GM23248 (cell line): ENCODE measurements at regions of chr16 and their contacts with region 1.

Region 1: DNA sequence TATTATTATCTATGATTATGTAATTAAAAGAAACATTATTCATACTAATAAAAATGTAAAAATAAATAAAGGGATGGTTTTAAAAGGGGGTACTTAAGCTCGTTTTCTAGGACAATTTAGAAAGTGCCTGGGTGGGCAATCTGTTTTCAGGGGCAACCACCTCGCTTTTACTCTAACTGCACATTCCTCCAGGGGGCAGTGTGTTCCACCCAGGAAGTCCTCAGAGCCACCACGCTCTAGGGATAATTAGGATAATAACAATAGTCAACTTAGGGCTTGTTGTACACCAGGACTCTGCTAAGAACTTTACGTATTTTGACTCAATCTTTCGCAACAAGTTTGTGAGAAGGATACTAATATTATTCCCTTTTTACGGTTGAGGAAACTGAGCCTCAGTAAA is 396.7 kb upstream of the MAF start:
- DNase-seq: peak; percentile 52
- H3K4me3 ChIP-seq: no peak overlapping the region
- H3K27ac ChIP-seq: no peak overlapping the region
- H3K4me1 ChIP-seq: no peaks in the 10 kb centered on the region
- H3K27me3 ChIP-seq: no peaks in the 10 kb centered on the region

Region 2: DNA sequence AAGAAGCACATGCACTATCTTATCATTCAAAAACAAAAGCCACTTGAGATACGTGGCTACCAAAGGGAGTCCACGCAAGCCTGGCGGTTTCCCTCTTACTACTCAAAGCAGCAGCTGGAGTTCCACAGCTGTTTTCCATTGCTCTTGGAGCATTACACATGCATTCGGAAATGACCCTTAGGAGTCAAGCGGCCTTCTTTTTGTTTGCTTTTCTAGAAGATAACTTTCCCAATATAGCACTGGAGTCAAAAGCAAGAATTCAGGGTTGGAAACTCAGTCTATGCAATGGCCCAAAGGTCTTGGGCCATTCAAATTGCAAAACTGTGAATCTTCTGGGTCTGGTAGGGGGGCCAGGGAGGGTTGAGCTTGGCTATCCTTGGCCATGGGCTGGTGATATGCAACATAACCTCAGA is 298.9 kb before region 1 on chr16:
- in situ Hi-C with region 1: no loop called
- DNase-seq: no peak
- H3K4me3 ChIP-seq: no peak overlapping the region
- H3K27ac ChIP-seq: no peak overlapping the region
- H3K4me1 ChIP-seq: no peaks in the 10 kb centered on the region
- H3K27me3 ChIP-seq: no peaks in the 10 kb centered on the region

Region 3: GRCh38 chr16:80369138-80369958 is 372.1 kb after region 1 on chr16:
- in situ Hi-C with region 1: loop called (anchors 10 kb)
- DNase-seq: peak; percentile 78
- H3K4me3 ChIP-seq: no peak overlapping the region
- H3K27ac ChIP-seq: no peak overlapping the region
- H3K4me1 ChIP-seq: no peaks in the 10 kb centered on the region
- H3K27me3 ChIP-seq: no peaks in the 10 kb centered on the region